ENCODE measurements at regions of chr1 and their contacts with region 1.

Region 1: DNA sequence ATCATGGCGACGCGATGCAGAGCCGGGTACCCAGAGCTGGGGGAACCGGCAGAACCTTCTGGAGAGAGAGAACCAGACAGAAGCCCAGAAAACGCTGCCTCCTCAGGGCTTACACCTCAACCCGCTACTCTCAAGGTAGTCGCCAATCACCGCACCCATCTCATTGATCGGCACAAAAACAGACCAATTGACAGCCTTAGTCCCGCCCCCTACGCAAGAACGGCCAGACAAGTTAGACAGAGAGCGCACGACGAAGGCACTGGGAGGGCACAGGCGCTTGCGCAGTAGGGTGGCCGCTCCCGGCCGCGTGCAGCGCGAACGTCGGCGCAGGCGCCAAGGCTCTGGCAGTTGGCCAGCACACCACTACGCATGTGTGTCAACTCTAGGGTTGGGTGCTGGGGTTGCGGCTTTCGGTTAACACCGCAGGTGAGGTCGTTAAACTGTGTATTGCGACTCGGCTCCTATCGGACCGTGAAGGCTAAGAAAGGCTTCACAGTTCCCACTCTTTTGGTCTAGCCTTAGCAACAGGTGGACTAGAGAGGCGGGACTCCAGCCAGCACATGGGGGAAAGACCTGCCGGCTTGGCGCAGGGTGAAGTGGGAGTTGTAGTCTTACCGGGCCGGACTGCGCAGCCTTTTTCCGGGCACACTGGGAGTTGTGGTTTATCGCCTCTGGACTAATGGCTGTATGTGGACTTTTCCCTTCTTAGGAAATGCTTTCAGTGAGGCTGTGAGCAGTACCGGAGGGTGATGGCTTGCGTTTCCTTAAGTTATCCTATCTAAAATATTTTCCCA is at the starts of genes CCT3 and TSACC:
- DNase-seq: peak; percentile 99
- ATAC-seq: peak; percentile 96
- H3K4me3 Mint-ChIP-seq: peak within 1 kb of the TSS; percentile 98
- H3K27ac Mint-ChIP-seq: peak within 1 kb of the TSS; percentile 96
- H3K4me1 Mint-ChIP-seq: peaks cover 29% of the 10 kb centered on the region
- H3K27me3 Mint-ChIP-seq: no peaks in the 10 kb centered on the region
- total RNA-seq, gene CCT3: 297 to 406 TPM
- total RNA-seq, gene TSACC: 0.25 to 0.83 TPM

Region 2: DNA sequence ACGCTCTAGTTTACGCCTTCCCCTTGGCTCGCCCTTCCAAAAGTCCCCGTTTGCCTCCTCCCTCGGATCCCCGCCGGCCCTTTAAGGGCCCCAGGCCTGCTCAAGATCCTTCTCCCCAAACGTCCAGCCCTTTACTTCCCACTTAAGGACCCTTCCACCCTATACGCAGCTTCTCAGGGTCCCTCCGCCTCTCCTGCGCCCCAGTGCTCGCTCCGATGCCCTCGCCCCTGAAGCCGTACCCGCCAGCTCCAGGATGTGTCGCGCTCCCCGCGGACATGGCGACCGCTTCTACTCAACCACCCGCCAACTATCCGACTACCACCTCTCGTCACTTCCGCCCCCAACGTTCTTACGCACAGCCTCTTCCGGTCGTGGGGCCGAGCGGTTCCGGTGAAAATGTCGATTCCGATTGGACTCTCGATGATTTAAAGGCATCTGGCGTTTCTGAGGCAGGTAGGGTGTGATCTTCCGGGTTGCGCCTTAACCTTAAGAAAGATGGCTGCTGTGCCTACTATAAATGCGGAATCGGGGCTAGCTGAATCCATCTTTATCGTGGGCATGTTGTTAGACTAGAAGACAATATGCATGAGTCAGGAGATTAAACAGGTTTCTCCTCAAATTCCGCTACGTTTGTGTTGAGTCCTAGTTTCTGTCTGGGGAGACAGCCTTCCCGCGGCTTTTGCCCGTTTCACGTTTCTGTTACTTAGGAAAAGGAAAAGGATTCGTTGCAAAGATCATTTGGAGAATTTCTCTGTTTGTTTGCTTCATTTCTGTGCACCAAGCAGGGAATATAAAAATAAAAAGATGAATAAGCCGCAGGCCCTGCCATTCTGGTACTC is 404.1 kb before region 1 on chr1 and contains the start of gene KHDC4:
- CTCF ChIA-PET with region 1: no interaction called
- POLR2A ChIA-PET with region 1: no interaction called
- intact Hi-C with region 1: loop called (anchors 1 kb)
- DNase-seq: peak; percentile 97
- ATAC-seq: peak; percentile 97
- H3K4me3 Mint-ChIP-seq: no peak within 1 kb of the TSS
- H3K27ac Mint-ChIP-seq: no peak within 1 kb of the TSS
- H3K4me1 Mint-ChIP-seq: peaks cover 46% of the 10 kb centered on the region
- H3K27me3 Mint-ChIP-seq: no peaks in the 10 kb centered on the region
- total RNA-seq, gene KHDC4: 68.7 to 97.5 TPM

Region 3: GRCh38 chr1:156096640-156097391 is 241.6 kb before region 1 on chr1:
- CTCF ChIA-PET with region 1: interaction called, 3 read pairs
- POLR2A ChIA-PET with region 1: no interaction called
- intact Hi-C with region 1: loop called in 1 of 2 experiments (anchors 1 kb)
- DNase-seq: peak; percentile 96
- ATAC-seq: peak; percentile 76
- H3K4me3 Mint-ChIP-seq: peak overlapping the region; percentile 60
- H3K27ac Mint-ChIP-seq: peak overlapping the region; percentile 94
- H3K4me1 Mint-ChIP-seq: peaks cover 58% of the 10 kb centered on the region
- H3K27me3 Mint-ChIP-seq: peaks cover 7% of the 10 kb centered on the region

Region 4: DNA sequence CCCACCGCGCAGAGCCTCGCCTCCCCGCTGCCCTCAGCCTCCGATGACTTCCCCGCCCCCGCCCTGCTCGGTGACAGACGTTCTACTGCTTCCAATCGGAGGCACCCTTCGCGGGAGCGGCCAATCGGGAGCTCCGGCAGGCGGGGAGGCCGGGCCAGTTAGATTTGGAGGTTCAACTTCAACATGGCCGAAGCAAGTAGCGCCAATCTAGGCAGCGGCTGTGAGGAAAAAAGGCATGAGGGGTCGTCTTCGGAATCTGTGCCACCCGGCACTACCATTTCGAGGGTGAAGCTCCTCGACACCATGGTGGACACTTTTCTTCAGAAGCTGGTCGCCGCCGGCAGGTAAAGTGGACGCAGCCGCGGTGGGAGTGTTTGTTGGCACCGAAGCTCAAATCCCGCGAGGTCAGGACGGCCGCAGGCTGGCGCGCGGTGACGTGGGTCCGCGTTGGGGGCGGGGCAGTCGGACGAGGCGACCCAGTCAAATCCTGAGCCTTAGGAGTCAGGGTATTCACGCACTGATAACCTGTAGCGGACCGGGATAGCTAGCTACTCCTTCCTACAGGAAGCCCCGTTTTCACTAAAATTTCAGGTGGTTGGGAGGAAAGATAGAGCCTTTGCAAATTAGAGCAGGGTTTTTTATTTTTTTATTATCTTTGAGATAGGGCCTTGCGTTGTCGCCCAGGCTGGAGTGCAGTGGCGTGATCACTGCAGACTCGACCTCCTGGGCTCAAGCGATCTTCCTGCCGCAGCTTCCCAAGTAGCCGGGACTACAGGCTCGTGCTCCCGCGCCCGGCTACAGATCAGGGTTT is 125.3 kb before region 1 on chr1 and contains the start of gene PMF1:
- CTCF ChIA-PET with region 1: no interaction called
- POLR2A ChIA-PET with region 1: no interaction called
- intact Hi-C with region 1: loop called in 1 of 2 experiments (anchors 1 kb)
- DNase-seq: peak; percentile 98
- ATAC-seq: peak; percentile 90
- H3K4me3 Mint-ChIP-seq: peak within 1 kb of the TSS; percentile 76
- H3K27ac Mint-ChIP-seq: peak within 1 kb of the TSS; percentile 98
- H3K4me1 Mint-ChIP-seq: peaks cover 41% of the 10 kb centered on the region
- H3K27me3 Mint-ChIP-seq: no peaks in the 10 kb centered on the region
- total RNA-seq, gene PMF1: 108 to 117 TPM

Region 5: GRCh38 chr1:156740679-156741612 is 402.6 kb after region 1 on chr1 and contains the start of gene MRPL24:
- CTCF ChIA-PET with region 1: no interaction called
- POLR2A ChIA-PET with region 1: no interaction called
- intact Hi-C with region 1: loop called in 1 of 2 experiments (anchors 1 kb)
- DNase-seq: peak; percentile 98
- ATAC-seq: peak; percentile 86
- H3K4me3 Mint-ChIP-seq: peak within 1 kb of the TSS; percentile 98
- H3K27ac Mint-ChIP-seq: peak within 1 kb of the TSS; percentile 94
- H3K4me1 Mint-ChIP-seq: peaks cover 49% of the 10 kb centered on the region
- H3K27me3 Mint-ChIP-seq: no peaks in the 10 kb centered on the region
- total RNA-seq, gene MRPL24: 81.9 to 89.7 TPM

Measured in activated CD4-positive, alpha-beta T cell treated with anti-CD3 and anti-CD28 coated beads for 36 hours (primary cell).